SK-N-SH (cell line): ENCODE measurements at regions of chr11 and their contacts with region 1.

Region 1: DNA sequence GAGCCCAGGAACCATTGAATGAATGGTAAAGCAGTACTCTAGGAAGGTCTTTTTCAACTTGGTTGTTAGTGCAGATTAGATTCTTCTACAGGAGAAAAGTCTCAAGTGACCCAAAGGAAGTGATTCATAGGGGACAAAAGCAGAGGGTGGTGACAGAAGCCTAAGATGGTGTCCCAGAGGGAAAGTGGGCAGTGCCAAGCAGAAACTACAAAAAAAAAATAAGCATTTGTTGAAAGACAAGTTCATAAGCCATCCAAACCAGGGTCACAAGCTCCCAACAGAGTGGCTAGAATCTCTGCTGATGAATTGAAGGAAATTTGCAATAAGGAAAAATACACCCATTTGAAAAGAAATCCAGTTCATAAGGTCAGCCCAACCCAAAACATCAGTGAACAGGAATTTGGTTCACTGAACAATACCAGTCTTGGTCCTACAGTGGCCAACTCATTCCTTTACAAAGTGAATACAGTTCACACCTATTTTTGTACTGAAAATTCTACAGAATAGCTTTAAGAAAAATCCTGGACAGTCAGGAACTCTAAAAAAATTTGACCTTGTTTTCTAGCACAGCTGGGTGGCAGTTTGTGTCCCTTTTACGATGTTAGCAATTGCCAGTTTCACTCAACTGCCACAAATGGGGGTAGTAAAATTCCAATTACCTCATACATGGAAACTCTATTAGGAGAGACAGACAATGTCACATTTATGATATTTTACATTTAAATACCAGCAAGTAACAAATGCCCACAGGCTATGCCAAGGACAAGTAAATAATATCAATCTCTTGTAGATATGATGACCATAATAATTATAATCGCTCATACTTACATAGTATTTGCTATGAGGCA is 21.6 kb upstream of the NUP160 start:
- DNase-seq: no peak
- H3K4me3 ChIP-seq: no peak overlapping the region
- H3K27ac ChIP-seq: no peak overlapping the region; a peak in 1 of 4 replicates
- H3K4me1 ChIP-seq: peaks cover 0 to 12% of the 10 kb centered on the region in 2 experiments; a peak in 2 of 4 replicates
- H3K27me3 ChIP-seq: no peaks in the 10 kb centered on the region
- CTCF ChIP-seq: no peak
- EP300 ChIP-seq: no peak
- RAD21 ChIP-seq: no peak

Region 2: DNA sequence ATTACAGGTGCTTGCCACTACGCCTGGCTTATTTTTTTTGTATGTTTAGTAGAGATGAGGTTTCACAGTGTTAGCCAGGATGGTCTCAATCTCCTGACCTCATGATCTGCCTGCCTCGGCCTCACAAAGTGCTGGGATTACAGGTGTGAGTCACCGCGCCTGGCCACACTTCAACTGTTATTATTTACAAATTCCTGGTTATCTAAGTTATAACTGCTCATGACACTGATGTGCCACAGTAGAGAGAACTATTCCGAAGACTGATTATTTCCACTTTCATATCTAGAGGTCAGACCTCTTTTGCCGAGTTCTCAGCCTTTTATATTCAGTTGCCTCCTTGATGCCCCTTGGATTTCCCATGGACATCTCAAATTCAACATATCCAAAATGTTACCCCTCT is 17.7 kb before region 1 on chr11:
- CTCF ChIA-PET with region 1: interaction called, 10 read pairs
- POLR2A ChIA-PET with region 1: no interaction called
- DNase-seq: no peak
- H3K4me3 ChIP-seq: no peak overlapping the region
- H3K27ac ChIP-seq: no peak overlapping the region
- H3K4me1 ChIP-seq: peaks cover 3 to 7% of the 10 kb centered on the region in 2 experiments; a peak in 3 of 4 replicates
- H3K27me3 ChIP-seq: no peaks in the 10 kb centered on the region
- CTCF ChIP-seq: no peak
- EP300 ChIP-seq: no peak
- RAD21 ChIP-seq: no peak

Region 3: GRCh38 chr11:47991266-47991830 is 121.6 kb after region 1 on chr11:
- CTCF ChIA-PET with region 1: no interaction called
- POLR2A ChIA-PET with region 1: no interaction called
- DNase-seq: no peak
- H3K4me3 ChIP-seq: 0 out of 4 replicates have a peak overlapping the region, but pooled peaks of 1 of the 2 experiments have one; percentile 12
- H3K27ac ChIP-seq: peak overlapping the region in 1 of 2 experiments; percentile 62; a peak in 2 of 4 replicates
- H3K4me1 ChIP-seq: peaks cover 5 to 22% of the 10 kb centered on the region in 2 experiments; a peak in 3 of 4 replicates
- H3K27me3 ChIP-seq: no peaks in the 10 kb centered on the region
- CTCF ChIP-seq: no peak
- EP300 ChIP-seq: no peak
- RAD21 ChIP-seq: no peak